Breast epithelium (tissue), 4 donors: ENCODE measurements at regions of chr9 and their contacts with region 1.

Region 1: GRCh38 chr9:99592834-99593574 is 228.7 kb upstream of the NR4A3 start:
- DNase-seq: no peak
- H3K4me3 ChIP-seq: no peak overlapping the region
- H3K27ac ChIP-seq: no peak overlapping the region
- H3K4me1 ChIP-seq: no peaks in the 10 kb centered on the region
- H3K27me3 ChIP-seq: no peaks in the 10 kb centered on the region
- CTCF ChIP-seq: no peak
- POLR2A ChIP-seq: no peak

Region 2: DNA sequence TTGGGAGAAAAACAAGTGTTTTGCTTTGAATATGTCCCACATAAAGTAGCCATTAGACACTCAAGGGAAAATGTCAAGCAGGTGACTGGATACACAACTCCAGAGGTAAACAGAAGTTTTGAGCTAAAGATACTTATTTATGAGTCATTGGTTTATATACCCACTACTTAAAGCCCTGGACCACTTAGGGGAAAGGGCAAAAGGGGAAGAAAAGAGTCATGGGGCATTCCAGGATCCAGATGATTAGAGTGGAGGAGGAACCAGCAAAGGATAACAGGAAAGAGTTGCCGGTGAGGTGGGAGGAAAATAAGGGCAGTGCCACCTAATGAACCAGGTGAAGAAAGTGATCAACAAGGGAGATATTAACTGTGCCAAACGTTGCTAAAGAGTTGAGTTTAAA is 25.6 kb before region 1 on chr9:
- intact Hi-C with region 1: loop called (anchors 2 kb)
- DNase-seq: no peak
- H3K4me3 ChIP-seq: no peak overlapping the region
- H3K27ac ChIP-seq: no peak overlapping the region
- H3K4me1 ChIP-seq: no peaks in the 10 kb centered on the region
- H3K27me3 ChIP-seq: no peaks in the 10 kb centered on the region
- CTCF ChIP-seq: no peak
- POLR2A ChIP-seq: no peak

Region 3: DNA sequence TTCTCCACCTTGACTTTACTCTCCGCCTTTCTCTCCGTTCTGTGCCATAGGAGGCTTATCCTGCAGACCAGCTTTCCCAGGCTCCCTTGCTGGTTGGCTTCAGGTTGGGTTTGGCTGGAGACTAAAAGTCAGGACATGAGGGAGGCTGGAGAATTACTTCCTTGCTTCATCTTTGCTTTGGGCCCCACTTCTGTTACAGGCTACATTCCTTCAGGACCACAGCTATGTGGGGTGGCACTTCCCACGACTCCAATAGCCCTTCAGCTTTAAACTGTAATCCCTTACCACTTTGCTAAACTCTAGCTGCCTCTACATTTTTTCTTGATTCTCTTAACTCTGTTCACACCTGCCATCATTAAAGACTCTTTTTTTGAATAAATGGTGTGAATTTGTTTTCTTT is 42.0 kb after region 1 on chr9:
- intact Hi-C with region 1: no loop called
- DNase-seq: no peak
- H3K4me3 ChIP-seq: no peak overlapping the region
- H3K27ac ChIP-seq: no peak overlapping the region
- H3K4me1 ChIP-seq: no peaks in the 10 kb centered on the region
- H3K27me3 ChIP-seq: no peaks in the 10 kb centered on the region
- CTCF ChIP-seq: no peak
- POLR2A ChIP-seq: no peak